Heart right ventricle (tissue), 16 donors: ENCODE measurements at regions of chr10 and their contacts with region 1.

Region 1: GRCh38 chr10:121559326-121560026 is 38.8 kb downstream of the FGFR2 start:
- DNase-seq: no peak
- ATAC-seq: no peak
- H3K4me3 ChIP-seq: no peak overlapping the region
- H3K27ac ChIP-seq: no peak overlapping the region
- H3K4me1 ChIP-seq: no peaks in the 10 kb centered on the region
- H3K27me3 ChIP-seq: peaks cover 0 to 13% (median 0%) of the 10 kb centered on the region in 7 donors
- CTCF ChIP-seq: no peak

Region 2: DNA sequence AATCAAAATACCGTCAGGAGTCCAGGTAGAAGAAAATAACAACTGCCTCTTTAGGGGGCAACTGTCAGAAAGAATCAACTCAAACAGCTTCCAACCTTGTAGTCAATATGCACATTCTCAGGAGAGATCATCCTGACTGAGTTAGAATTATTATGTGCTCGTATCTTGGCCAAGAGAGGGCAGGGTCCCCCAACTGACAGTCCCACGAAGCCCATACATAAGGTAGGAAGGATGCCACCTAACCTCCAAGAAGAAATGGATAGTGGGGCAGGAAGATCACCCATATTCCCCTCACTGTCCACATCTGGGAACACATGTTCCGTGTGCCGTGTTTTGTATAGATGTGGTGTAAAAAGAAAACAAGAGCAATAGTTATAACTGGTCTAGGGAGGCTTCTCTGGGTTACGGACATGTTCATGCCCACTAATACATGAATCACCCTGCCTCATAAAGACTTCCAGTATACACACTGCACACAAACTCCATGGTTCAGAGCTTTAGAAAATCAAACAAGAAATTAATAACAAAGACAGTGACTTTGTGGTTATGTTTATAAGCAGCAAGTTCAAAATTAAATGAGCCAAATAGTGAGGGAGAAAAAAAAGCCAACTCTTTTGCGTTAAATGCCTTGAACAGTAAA is 256.8 kb before region 1 on chr10:
- intact Hi-C with region 1: loop called in 1 of 10 experiments (anchors 10 kb)
- DNase-seq: no peak
- ATAC-seq: no peak
- H3K4me3 ChIP-seq: no peak overlapping the region
- H3K27ac ChIP-seq: no peak overlapping the region
- H3K4me1 ChIP-seq: no peaks in the 10 kb centered on the region
- H3K27me3 ChIP-seq: peaks cover 0 to 16% (median 6%) of the 10 kb centered on the region in 7 donors
- CTCF ChIP-seq: no peak